Activated CD4-positive, alpha-beta T cell treated with anti-CD3 and anti-CD28 coated beads for 36 hours (primary cell): ENCODE measurements at regions of chr14 and their contacts with region 1.

Region 1: DNA sequence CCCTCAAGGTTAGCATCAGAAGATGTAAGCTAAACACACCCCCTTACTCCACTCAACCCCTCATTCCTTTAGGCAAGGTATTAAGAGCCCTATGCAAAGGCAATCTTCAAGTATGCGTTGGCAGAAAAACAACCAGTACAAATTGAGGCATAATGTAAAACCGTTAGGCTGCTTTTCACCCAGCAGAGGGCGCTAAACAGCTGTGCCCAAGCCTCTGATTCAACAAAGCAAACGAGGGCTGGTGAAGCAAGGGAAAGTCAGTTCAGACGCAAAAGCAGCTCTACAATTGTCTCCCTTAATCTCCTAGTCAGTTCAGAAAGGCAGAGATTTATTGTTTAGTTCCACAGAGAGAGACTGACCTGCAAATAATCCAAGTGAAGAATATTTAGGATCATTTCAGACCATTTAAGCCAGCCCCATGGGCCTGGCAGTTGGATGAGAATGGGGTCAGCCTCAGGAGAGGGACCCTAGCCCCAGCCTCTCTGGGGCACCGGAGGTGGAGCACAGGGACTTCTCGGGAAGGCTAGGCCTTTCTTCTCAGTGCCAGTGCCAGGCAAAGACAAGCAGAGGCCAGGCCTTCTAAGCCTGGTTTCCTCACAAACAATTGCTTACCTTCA is 23.5 kb downstream of the DCAF5 start:
- DNase-seq: peak; percentile 85
- ATAC-seq: peak; percentile 77
- H3K4me3 Mint-ChIP-seq: no peak overlapping the region
- H3K27ac Mint-ChIP-seq: peak overlapping the region; percentile 37
- H3K4me1 Mint-ChIP-seq: peaks cover 72% of the 10 kb centered on the region
- H3K27me3 Mint-ChIP-seq: no peaks in the 10 kb centered on the region

Region 2: GRCh38 chr14:69002069-69002468 is 127.3 kb before region 1 on chr14:
- CTCF ChIA-PET with region 1: no interaction called
- POLR2A ChIA-PET with region 1: no interaction called
- intact Hi-C with region 1: no loop called
- DNase-seq: no peak
- ATAC-seq: no peak
- H3K4me3 Mint-ChIP-seq: no peak overlapping the region
- H3K27ac Mint-ChIP-seq: no peak overlapping the region
- H3K4me1 Mint-ChIP-seq: no peaks in the 10 kb centered on the region
- H3K27me3 Mint-ChIP-seq: no peaks in the 10 kb centered on the region

Region 3: DNA sequence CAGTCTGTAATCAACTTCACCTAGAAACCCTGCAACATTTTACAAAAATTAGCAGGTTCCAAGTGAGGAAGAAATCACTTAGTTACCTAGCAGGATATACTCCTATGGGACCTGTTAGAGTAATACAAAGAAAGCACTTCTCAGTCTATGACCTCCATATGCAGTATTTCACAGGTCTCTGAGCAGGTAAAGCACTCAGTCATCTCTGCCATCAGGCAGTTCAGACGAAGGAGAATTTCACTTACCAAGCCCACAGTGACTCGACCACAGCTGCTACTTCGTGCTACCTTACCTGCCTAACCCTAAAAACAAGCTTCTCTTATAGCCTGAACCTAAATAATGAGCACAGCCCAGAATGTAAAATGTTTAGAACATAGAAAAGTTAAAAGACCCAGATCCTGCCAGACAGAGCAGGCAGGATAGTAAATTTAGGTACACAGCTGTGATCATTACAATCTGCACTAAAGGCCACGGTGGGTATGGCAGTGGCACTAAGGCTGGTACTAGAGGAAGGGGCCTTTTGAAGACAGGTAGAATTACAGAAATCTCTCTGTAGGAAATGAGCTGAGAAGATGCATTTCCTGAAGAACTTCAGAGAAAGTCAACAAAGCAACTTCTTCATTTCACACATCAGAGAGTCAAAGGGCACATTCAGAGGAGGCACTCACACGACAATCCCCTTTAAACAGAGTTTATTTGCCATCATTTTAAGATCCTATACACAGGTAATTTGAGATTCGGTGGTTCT is 12.2 kb before region 1 on chr14:
- CTCF ChIA-PET with region 1: interaction called, 17 read pairs
- POLR2A ChIA-PET with region 1: no interaction called
- intact Hi-C with region 1: no loop called
- DNase-seq: no peak
- ATAC-seq: peak; percentile 73
- H3K4me3 Mint-ChIP-seq: no peak overlapping the region
- H3K27ac Mint-ChIP-seq: peak overlapping the region; percentile 24
- H3K4me1 Mint-ChIP-seq: peaks cover 32% of the 10 kb centered on the region
- H3K27me3 Mint-ChIP-seq: no peaks in the 10 kb centered on the region

Region 4: GRCh38 chr14:69191340-69192111 is 62.2 kb after region 1 on chr14 and contains the start of gene EXD2:
- CTCF ChIA-PET with region 1: interaction called, 16 read pairs
- POLR2A ChIA-PET with region 1: no interaction called
- intact Hi-C with region 1: loop called (anchors 1 to 2 kb)
- DNase-seq: peak; percentile 90
- ATAC-seq: peak; percentile 93
- H3K4me3 Mint-ChIP-seq: peak within 1 kb of the TSS; percentile 92
- H3K27ac Mint-ChIP-seq: peak within 1 kb of the TSS; percentile 91
- H3K4me1 Mint-ChIP-seq: peaks cover 25% of the 10 kb centered on the region
- H3K27me3 Mint-ChIP-seq: no peaks in the 10 kb centered on the region
- total RNA-seq, gene EXD2: 10.8 to 14.5 TPM

Region 5: DNA sequence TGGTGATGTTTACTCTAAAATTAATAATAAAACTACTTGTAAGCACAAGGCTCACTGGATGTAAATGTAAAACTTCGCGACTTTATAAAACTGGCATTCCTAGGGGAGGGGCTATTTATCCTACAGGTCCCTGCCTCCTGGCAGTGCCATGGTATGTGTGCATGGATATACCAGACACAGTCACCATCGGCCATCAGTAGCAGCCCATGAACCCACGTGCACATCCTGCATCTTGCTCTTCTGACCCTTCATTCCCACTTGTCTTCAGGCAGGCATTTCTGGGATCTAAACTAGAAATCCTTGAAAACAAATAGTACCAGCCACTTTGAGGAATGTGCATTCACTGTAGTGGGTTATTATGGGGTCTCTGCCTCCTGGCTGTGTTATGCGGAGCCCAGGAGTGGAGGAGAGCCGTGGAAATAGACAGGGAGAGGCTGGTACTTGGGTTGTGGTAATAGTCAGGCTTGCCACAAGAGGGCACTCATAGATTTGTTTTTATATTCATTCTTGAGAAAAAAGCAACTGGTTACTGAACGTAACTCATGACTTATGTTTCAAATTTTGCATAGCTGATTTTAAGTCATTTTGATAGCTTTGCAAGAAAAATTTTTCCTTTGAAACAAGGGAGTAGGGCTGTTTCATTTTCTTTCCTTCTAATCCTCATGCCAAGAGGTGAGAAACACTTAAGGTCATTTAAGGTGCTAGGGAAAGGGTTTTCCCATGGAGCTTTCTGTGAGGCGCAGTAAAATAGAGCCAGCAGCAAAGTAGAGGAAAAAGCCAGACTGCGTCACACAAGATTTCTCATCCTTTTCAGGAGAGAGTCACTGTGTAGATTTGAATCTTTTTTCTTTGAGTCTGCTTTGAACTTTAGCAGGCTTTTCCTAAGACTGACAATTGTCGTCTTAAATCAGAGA is 113.2 kb after region 1 on chr14:
- CTCF ChIA-PET with region 1: interaction called, 34 read pairs
- POLR2A ChIA-PET with region 1: interaction called, 7 read pairs
- intact Hi-C with region 1: loop called (anchors 1 to 5 kb)
- DNase-seq: peak; percentile 70
- ATAC-seq: peak; percentile 86
- H3K4me3 Mint-ChIP-seq: no peak overlapping the region
- H3K27ac Mint-ChIP-seq: no peak overlapping the region
- H3K4me1 Mint-ChIP-seq: no peaks in the 10 kb centered on the region
- H3K27me3 Mint-ChIP-seq: no peaks in the 10 kb centered on the region

Region 6: DNA sequence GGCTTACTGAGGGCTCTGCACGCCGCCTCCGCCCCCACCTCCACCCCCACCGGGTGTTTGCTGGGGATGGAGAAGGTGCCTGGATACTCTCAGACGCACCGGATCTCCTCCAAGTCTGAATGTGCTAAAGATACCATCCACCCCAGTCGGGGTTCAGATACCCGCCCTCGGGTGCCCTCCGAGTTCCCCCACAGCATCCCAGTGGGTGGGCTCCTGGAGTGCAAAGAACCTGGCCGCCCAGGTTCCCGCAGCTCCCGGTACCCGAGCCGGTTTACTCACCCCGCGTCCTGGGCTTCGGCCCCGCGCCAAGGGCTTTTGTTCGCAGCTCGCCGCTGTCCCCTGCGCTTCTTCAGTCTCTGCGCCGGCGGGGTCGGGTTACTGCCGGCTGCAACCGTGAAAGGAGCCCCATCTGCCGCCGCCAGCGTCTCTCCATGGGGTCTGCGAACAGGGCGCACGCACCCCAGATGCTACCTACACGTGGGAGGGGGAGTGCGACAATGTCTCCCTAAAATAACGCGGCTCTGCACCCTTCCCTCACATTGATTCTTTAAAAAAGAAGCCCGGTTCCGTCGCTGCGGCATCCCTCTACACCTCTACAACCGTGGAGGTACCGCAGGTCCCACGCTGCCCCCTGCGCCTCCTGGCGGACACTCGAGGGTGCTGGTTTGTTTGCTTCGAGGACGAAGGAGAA is 445.0 kb after region 1 on chr14 and contains the start of gene CCDC177:
- CTCF ChIA-PET with region 1: no interaction called
- POLR2A ChIA-PET with region 1: no interaction called
- intact Hi-C with region 1: loop called (anchors 10 kb)
- DNase-seq: peak; percentile 88
- ATAC-seq: peak; percentile 78
- H3K4me3 Mint-ChIP-seq: peak within 1 kb of the TSS; percentile 58
- H3K27ac Mint-ChIP-seq: peak within 1 kb of the TSS; percentile 4
- H3K4me1 Mint-ChIP-seq: peaks cover 10% of the 10 kb centered on the region
- H3K27me3 Mint-ChIP-seq: peaks cover 42% of the 10 kb centered on the region
- total RNA-seq, gene CCDC177: not detected

Region 7: DNA sequence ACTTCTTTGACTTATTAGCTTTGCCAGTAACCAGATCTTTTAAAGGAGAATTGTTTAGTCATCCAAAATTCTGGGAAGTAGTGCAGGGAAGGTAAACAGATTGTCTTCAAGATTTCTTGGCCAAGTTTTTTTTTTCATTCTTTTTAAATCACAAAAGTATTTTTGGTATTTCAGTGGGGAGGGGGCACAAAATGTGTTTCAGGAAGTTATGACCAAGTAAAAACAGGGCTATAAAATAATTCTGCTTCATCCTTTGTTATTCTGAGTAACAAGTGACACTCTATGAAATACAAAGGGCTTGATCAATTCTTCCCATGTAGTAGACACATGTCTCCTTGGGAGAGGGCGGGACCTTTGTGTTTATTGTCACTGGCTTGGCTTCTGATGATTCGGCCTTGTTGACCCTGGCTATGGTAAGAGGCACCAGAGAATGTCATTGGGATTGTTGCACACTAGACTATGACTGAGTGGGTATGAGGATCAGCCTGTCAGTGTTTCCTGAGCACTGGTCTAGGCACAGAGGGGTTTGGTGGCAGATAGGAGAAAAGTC is 537.4 kb after region 1 on chr14:
- CTCF ChIA-PET with region 1: no interaction called
- POLR2A ChIA-PET with region 1: no interaction called
- intact Hi-C with region 1: no loop called
- DNase-seq: no peak
- ATAC-seq: peak; percentile 27
- H3K4me3 Mint-ChIP-seq: peak overlapping the region; percentile 59
- H3K27ac Mint-ChIP-seq: peak overlapping the region; percentile 96
- H3K4me1 Mint-ChIP-seq: peaks cover 96% of the 10 kb centered on the region
- H3K27me3 Mint-ChIP-seq: no peaks in the 10 kb centered on the region